ENCODE measurements at regions of chr10 and their contacts with region 1.

Region 1: DNA sequence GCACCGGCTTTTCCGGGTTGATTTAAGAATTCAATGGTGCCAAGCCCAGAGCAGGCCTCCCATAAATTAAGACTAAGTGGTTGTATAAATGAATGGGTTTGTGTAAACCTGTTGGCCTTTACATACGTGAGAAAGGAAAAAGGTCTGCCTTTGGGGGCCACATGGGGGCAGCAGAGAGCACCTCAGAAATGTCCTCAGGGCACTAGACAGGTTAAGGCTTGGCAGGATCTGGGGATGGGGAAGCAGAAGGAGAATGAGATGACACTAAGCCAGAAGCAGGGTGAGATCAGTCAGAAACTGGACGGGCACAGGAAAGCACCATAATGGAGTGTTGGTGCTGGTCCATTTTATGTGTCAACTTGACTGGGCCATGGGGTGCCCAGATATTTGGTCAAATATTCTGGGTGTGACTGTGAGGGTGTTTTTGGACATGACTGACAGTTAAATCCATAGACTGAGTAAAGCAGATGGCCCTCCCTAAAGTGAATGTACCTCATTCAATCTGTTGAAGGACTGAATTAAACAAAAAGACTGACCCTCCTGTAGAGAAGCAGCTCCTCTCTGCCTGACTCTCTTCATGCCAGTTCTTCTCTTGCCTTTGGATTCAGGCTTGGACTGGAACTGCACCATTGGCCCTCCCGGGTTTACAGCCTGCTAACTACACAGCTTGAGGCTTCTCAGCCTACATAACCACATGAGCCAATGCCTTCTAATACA is 58.9 kb downstream of the FRMPD2 start:
- DNase-seq: peak; percentile 69
- H3K4me3 ChIP-seq: no peak overlapping the region
- H3K27ac ChIP-seq: no peak overlapping the region
- H3K4me1 ChIP-seq: peaks cover 5% of the 10 kb centered on the region
- H3K27me3 ChIP-seq: no peaks in the 10 kb centered on the region
- CTCF ChIP-seq: peak; percentile 77 to 79

Region 2: GRCh38 chr10:48289501-48290238 is 74.0 kb after region 1 on chr10:
- CTCF ChIA-PET with region 1: no interaction called
- dilution Hi-C with region 1: loop called (anchors 5 kb)
- in situ Hi-C with region 1: loop called in 1 of 2 experiments (anchors 10 kb)
- intact Hi-C with region 1: loop called (anchors 1 kb)
- DNase-seq: peak; percentile 26
- H3K4me3 ChIP-seq: no peak overlapping the region
- H3K27ac ChIP-seq: no peak overlapping the region
- H3K4me1 ChIP-seq: peaks cover 3% of the 10 kb centered on the region
- H3K27me3 ChIP-seq: no peaks in the 10 kb centered on the region
- CTCF ChIP-seq: peak; percentile 69 to 87

Region 3: DNA sequence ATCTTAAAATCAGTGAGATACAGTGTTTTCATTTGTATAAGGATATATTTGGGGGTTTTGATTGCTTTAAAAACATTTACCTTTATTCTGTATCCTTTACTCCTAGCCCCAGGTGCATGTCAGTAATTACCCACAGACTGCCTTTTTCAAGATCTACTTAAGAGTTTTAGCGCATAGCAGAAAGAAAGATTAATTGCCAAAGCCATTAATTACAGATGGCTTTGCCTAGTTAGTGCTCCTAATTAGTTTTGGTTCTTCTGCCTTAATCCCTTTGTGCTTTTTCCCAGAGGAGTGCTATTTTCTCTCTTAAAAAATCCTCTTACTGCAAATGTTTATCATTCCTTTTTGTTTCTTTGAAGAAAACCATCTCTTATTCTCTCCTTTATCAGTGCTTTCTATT is 213.7 kb after region 1 on chr10:
- CTCF ChIA-PET with region 1: no interaction called
- dilution Hi-C with region 1: no loop called
- in situ Hi-C with region 1: no loop called
- intact Hi-C with region 1: no loop called
- DNase-seq: no peak
- H3K4me3 ChIP-seq: no peak overlapping the region
- H3K27ac ChIP-seq: no peak overlapping the region
- H3K4me1 ChIP-seq: no peaks in the 10 kb centered on the region
- H3K27me3 ChIP-seq: no peaks in the 10 kb centered on the region
- CTCF ChIP-seq: no peak

Region 4: GRCh38 chr10:48444266-48444665 is 228.6 kb after region 1 on chr10:
- CTCF ChIA-PET with region 1: no interaction called
- dilution Hi-C with region 1: no loop called
- in situ Hi-C with region 1: no loop called
- intact Hi-C with region 1: no loop called
- DNase-seq: peak; percentile 33
- H3K4me3 ChIP-seq: no peak overlapping the region
- H3K27ac ChIP-seq: no peak overlapping the region
- H3K4me1 ChIP-seq: peaks cover under 1% of the 10 kb centered on the region
- H3K27me3 ChIP-seq: no peaks in the 10 kb centered on the region
- CTCF ChIP-seq: peak in 1 of 2 donors; percentile 64